ENCODE measurements at regions of chr6 and their contacts with region 1.

Region 1: GRCh38 chr6:26054857-26055669 is 32.2 kb upstream of the HFE start:
- DNase-seq: peak; percentile 84 to 86
- ATAC-seq: peak; percentile 76 to 80
- H3K4me3 ChIP-seq: peak overlapping the region; percentile 73 to 87 (median 82)
- H3K27ac ChIP-seq: peak overlapping the region; percentile 87 to 96 (median 90)
- H3K4me1 ChIP-seq: peaks cover 11 to 15% of the 10 kb centered on the region in 2 donors
- H3K27me3 ChIP-seq: no peaks in the 10 kb centered on the region
- CTCF ChIP-seq: peak in 2 of 5 experiments; percentile 14 to 29
- POLR2A ChIP-seq: peak in 1 of 2 donors; percentile 21

Region 2: GRCh38 chr6:26003102-26003694 is 51.9 kb before region 1 on chr6:
- in situ Hi-C with region 1: no loop called
- intact Hi-C with region 1: no loop called
- DNase-seq: peak in 1 of 2 donors; percentile 25
- ATAC-seq: peak in 1 of 2 donors; percentile 82
- H3K4me3 ChIP-seq: no peak overlapping the region
- H3K27ac ChIP-seq: no peak overlapping the region
- H3K4me1 ChIP-seq: no peaks in the 10 kb centered on the region
- H3K27me3 ChIP-seq: no peaks in the 10 kb centered on the region
- CTCF ChIP-seq: peak; percentile 30 to 81 (median 54)
- POLR2A ChIP-seq: no peak

Region 3: GRCh38 chr6:26031595-26032339 is 23.3 kb before region 1 on chr6:
- in situ Hi-C with region 1: no loop called
- intact Hi-C with region 1: loop called (anchors 1 kb)
- DNase-seq: peak; percentile 61 to 66
- ATAC-seq: peak; percentile 72 to 79
- H3K4me3 ChIP-seq: peak overlapping the region; percentile 48 to 57 (median 54)
- H3K27ac ChIP-seq: peak overlapping the region in 1 of 4 donors; percentile 17
- H3K4me1 ChIP-seq: peaks cover 14 to 19% of the 10 kb centered on the region in 2 donors
- H3K27me3 ChIP-seq: peaks cover 26 to 87% (median 33%) of the 10 kb centered on the region in 3 donors
- CTCF ChIP-seq: no peak
- POLR2A ChIP-seq: no peak

Region 4: GRCh38 chr6:26097268-26097875 is 42.3 kb after region 1 on chr6:
- in situ Hi-C with region 1: loop called in 3 of 4 experiments (anchors 5 kb)
- intact Hi-C with region 1: loop called (anchors 2 kb)
- DNase-seq: peak; percentile 38 to 44
- ATAC-seq: peak; percentile 84 to 92
- H3K4me3 ChIP-seq: no peak overlapping the region
- H3K27ac ChIP-seq: no peak overlapping the region
- H3K4me1 ChIP-seq: no peaks in the 10 kb centered on the region
- H3K27me3 ChIP-seq: no peaks in the 10 kb centered on the region
- CTCF ChIP-seq: peak; percentile 77 to 81 (median 80)
- POLR2A ChIP-seq: no peak

Region 5: DNA sequence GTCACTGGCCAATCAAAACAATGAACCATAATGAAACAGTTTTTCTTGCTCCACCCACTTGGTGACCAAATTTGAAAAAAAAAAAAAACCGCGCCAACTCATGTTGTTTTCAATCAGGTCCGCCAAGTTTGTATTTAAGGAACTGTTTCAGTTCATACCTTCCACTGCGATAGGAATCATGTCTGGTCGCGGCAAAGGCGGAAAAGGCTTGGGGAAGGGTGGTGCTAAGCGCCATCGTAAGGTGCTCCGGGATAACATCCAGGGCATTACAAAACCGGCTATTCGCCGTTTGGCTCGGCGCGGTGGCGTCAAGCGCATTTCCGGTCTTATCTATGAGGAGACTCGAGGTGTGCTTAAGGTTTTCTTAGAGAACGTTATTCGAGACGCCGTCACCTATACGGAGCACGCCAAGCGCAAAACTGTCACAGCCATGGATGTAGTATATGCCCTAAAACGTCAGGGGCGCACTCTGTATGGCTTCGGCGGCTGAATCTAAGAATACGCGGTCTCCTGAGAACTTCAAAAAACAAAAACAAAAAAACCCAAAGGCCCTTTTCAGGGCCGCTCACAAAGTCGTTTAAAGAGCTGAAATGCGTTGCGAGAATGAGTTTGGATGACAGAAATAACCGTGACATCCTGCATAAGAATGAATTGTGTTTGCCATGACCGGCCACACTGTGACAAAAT is 48.9 kb after region 1 on chr6:
- in situ Hi-C with region 1: loop called in 2 of 4 experiments (anchors 5 kb)
- intact Hi-C with region 1: loop called (anchors 2 kb)
- DNase-seq: peak; percentile 76 to 87
- ATAC-seq: peak; percentile 98 to 99
- H3K4me3 ChIP-seq: peak overlapping the region; percentile 58 to 68 (median 63)
- H3K27ac ChIP-seq: peak overlapping the region; percentile 77 to 86 (median 84)
- H3K4me1 ChIP-seq: peaks cover 0 to 11% of the 10 kb centered on the region in 2 donors
- H3K27me3 ChIP-seq: no peaks in the 10 kb centered on the region
- CTCF ChIP-seq: peak; percentile 30 to 52 (median 40)
- POLR2A ChIP-seq: peak; percentile 86 to 88

Region 6: GRCh38 chr6:26156076-26156849 is 101.2 kb after region 1 on chr6:
- in situ Hi-C with region 1: no loop called
- intact Hi-C with region 1: loop called (anchors 1 kb)
- DNase-seq: peak; percentile 81 to 89
- ATAC-seq: peak; percentile 70 to 76
- H3K4me3 ChIP-seq: peak overlapping the region; percentile 71 to 95 (median 77)
- H3K27ac ChIP-seq: peak overlapping the region; percentile 88 to 97 (median 93)
- H3K4me1 ChIP-seq: peaks cover 11 to 23% of the 10 kb centered on the region in 2 donors
- H3K27me3 ChIP-seq: no peaks in the 10 kb centered on the region
- CTCF ChIP-seq: no peak
- POLR2A ChIP-seq: peak; percentile 99

Region 7: DNA sequence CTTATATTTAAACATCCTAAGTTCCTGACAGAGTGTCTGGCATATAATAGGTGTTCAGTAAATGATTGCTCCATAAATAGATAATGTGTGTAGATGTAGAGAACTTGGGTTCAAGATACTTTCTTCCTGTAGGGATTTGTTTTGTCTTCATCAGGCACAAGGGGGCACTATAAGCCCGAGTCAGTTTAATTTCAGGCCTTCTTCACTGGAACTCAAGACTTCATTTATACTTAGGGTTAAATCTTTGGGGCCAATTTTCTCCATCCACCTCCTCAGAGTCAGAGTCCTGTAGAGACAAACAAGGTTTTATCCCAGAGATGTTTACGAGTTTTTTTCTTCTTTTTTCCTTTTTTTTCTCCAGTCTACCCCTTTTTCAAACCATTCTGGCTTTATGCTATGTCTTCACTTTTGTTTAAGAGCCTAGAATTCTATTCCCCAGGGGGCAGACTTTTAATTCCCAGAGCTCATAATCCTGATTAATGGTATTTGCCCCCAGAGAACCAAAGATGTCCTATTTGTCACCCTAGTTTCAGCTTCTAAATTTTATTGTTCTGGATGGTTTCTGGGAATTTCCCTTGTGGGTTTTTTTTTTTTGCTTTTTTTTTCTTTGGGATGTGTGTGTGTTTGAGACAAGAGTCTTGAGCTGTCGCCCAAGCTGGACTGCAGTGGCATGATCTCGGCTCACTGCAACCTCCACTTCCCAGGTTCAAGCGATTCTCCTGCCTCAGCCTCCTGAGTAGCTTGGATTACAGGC is 120.5 kb after region 1 on chr6:
- in situ Hi-C with region 1: no loop called
- intact Hi-C with region 1: loop called (anchors 5 kb)
- DNase-seq: no peak
- ATAC-seq: no peak
- H3K4me3 ChIP-seq: no peak overlapping the region
- H3K27ac ChIP-seq: no peak overlapping the region
- H3K4me1 ChIP-seq: peaks cover 4 to 6% of the 10 kb centered on the region in 2 donors
- H3K27me3 ChIP-seq: no peaks in the 10 kb centered on the region
- CTCF ChIP-seq: peak in 3 of 5 experiments; percentile 17 to 58 (median 51)
- POLR2A ChIP-seq: no peak

Region 8: DNA sequence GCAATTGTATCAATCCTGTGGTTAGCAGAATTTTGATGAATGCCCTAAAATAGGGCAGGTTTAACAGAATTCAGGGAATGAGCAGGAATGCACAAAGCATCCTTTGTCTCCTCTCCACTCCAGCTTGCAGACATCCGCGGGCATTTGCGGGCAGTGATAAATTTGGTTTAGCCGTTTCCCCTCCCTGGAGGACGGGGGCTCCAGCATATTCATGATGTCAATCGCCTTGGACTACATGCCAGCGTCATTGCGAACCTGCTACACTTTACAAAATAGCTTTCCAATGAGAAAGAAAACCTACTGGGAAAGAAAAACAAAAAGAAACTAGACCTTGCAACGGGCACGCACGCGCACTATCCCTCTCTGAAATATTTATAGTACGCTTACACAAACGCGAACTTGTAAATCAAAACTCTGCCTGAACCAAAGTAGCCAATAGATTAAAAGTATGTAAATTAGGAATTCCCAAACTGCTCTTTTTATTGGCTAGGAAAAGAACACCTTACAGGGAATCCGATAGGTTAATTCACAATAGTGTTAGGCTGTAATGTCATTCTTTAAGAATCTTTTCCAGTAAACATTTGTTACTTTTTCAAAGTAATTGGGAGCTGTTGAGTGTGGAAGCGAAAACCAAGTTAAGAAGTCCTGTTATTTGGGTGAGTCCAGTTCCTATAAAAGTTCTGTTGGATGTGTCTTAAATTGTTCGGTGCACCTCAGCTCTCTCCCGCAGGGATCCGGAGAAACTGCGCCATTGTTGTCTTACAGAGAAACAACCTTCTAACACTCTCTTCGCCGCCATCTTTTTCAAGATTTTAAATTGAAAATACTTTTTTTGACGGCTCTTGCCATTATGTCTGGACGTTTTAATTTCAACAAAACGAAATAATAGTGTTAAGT is 168.8 kb after region 1 on chr6:
- in situ Hi-C with region 1: no loop called
- intact Hi-C with region 1: loop called (anchors 5 kb)
- DNase-seq: no peak
- ATAC-seq: peak; percentile 86 to 95
- H3K4me3 ChIP-seq: peak overlapping the region; percentile 46 to 52 (median 46)
- H3K27ac ChIP-seq: peak overlapping the region; percentile 64 to 75 (median 72)
- H3K4me1 ChIP-seq: no peaks in the 10 kb centered on the region
- H3K27me3 ChIP-seq: peaks cover 78 to 86% (median 86%) of the 10 kb centered on the region in 3 donors
- CTCF ChIP-seq: no peak
- POLR2A ChIP-seq: peak in 1 of 2 donors; percentile 61